Activated CD4-positive, alpha-beta T cell treated with anti-CD3 and anti-CD28 coated beads for 36 hours (primary cell): ENCODE measurements at regions of chr15 and their contacts with region 1.

Region 1: GRCh38 chr15:43977072-43977884 is 150.5 kb downstream of the WDR76 start:
- DNase-seq: peak; percentile 85
- ATAC-seq: peak; percentile 96
- H3K4me3 Mint-ChIP-seq: no peak overlapping the region
- H3K27ac Mint-ChIP-seq: no peak overlapping the region
- H3K4me1 Mint-ChIP-seq: peaks cover 19% of the 10 kb centered on the region
- H3K27me3 Mint-ChIP-seq: peaks cover 21% of the 10 kb centered on the region

Region 2: GRCh38 chr15:43948691-43949325 is 28.5 kb before region 1 on chr15:
- CTCF ChIA-PET with region 1: no interaction called
- POLR2A ChIA-PET with region 1: no interaction called
- intact Hi-C with region 1: loop called in 1 of 2 experiments (anchors 1 kb)
- DNase-seq: peak; percentile 11
- ATAC-seq: peak; percentile 84
- H3K4me3 Mint-ChIP-seq: no peak overlapping the region
- H3K27ac Mint-ChIP-seq: peak overlapping the region; percentile 74
- H3K4me1 Mint-ChIP-seq: peaks cover 20% of the 10 kb centered on the region
- H3K27me3 Mint-ChIP-seq: peaks cover 2% of the 10 kb centered on the region

Region 3: GRCh38 chr15:43954181-43954621 is 23.1 kb before region 1 on chr15:
- CTCF ChIA-PET with region 1: no interaction called
- POLR2A ChIA-PET with region 1: no interaction called
- intact Hi-C with region 1: loop called in 1 of 2 experiments (anchors 1 kb)
- DNase-seq: peak; percentile 33
- ATAC-seq: peak; percentile 93
- H3K4me3 Mint-ChIP-seq: no peak overlapping the region
- H3K27ac Mint-ChIP-seq: no peak overlapping the region
- H3K4me1 Mint-ChIP-seq: peaks cover 18% of the 10 kb centered on the region
- H3K27me3 Mint-ChIP-seq: peaks cover 7% of the 10 kb centered on the region